ENCODE measurements at regions of chr10 and their contacts with region 1.

Region 1: GRCh38 chr10:133509700-133510099 is 17.5 kb upstream of the CYP2E1 start:
- DNase-seq: no peak
- ATAC-seq: no peak
- H3K4me3 ChIP-seq: no peak overlapping the region
- H3K27ac ChIP-seq: no peak overlapping the region
- H3K4me1 ChIP-seq: no peaks in the 10 kb centered on the region
- H3K27me3 ChIP-seq: no peaks in the 10 kb centered on the region; a peak in 1 of 4 replicates
- CTCF ChIP-seq: no peak
- EP300 ChIP-seq: no peak
- POLR2A ChIP-seq: no peak
- RAD21 ChIP-seq: no peak

Region 2: DNA sequence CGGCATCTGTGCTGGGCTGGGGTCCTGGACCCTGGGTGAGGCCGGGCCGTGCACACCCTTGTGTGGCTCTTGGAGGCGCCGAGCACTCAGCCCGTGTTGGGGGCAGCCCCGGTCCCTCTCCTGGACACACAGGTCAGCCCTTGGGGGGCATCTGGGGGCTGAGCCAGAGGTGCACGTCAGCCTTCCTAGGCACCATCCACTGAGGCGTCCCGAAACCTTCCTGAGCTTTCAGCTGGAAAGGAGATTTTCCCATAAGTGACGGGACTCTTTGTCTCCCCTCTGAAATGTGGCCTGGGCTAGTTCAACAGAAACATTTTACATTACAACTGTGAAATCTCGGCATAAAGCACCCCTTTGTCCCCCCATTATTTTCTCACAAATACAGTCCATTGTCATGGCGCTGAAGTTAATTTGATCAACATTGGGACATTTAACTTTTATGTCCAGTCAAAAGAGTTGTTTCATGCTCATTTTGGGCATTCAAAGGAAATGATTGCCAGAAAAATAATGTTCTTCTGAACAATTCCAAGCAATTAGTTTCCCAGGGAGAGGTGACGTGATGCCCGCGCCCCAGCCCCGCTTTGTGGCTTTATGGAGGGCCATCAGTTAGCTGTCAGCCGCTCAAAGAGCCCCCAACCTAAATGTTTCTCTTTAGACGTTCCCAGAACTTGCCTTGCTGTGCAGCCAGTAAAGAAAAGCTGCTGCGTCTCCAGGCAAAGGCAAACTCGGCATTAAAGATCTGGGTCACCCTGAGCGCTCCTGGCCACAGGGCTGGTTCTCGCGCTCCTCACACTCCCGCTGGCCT is 794.5 kb before region 1 on chr10:
- CTCF ChIA-PET with region 1: no interaction called
- POLR2A ChIA-PET with region 1: no interaction called
- RAD21 ChIA-PET with region 1: no interaction called
- SMC1A ChIA-PET with region 1: no interaction called
- in situ Hi-C with region 1: no loop called
- intact Hi-C with region 1: loop called (anchors 5 kb)
- DNase-seq: no peak
- ATAC-seq: no peak
- H3K4me3 ChIP-seq: no peak overlapping the region
- H3K27ac ChIP-seq: no peak overlapping the region
- H3K4me1 ChIP-seq: no peaks in the 10 kb centered on the region
- H3K27me3 ChIP-seq: no peaks in the 10 kb centered on the region
- CTCF ChIP-seq: no peak
- EP300 ChIP-seq: no peak
- POLR2A ChIP-seq: no peak
- RAD21 ChIP-seq: no peak

Region 3: GRCh38 chr10:133318494-133319127 is 191.1 kb before region 1 on chr10:
- CTCF ChIA-PET with region 1: no interaction called
- POLR2A ChIA-PET with region 1: no interaction called
- RAD21 ChIA-PET with region 1: no interaction called
- SMC1A ChIA-PET with region 1: no interaction called
- in situ Hi-C with region 1: no loop called
- intact Hi-C with region 1: no loop called
- DNase-seq: no peak
- ATAC-seq: peak; percentile 90
- H3K4me3 ChIP-seq: peak overlapping the region; percentile 25; the same call in 1 of the 2 replicates
- H3K27ac ChIP-seq: no peak overlapping the region
- H3K4me1 ChIP-seq: no peaks in the 10 kb centered on the region
- H3K27me3 ChIP-seq: no peaks in the 10 kb centered on the region
- CTCF ChIP-seq: peak; percentile 67 to 73 (median 67); a peak in 5 of 6 replicates
- EP300 ChIP-seq: no peak
- POLR2A ChIP-seq: no peak
- RAD21 ChIP-seq: peak; percentile 58